ENCODE measurements at regions of chr12 and their contacts with region 1.

Region 1: GRCh38 chr12:114508529-114509129 is 102.7 kb upstream of the TBX5 start:
- DNase-seq: peak; percentile 19 to 74
- ATAC-seq: peak; percentile 53 to 61 (median 55)
- H3K4me3 ChIP-seq: no peak overlapping the region
- H3K4me3 Mint-ChIP-seq: no peak overlapping the region
- H3K27ac ChIP-seq: no peak overlapping the region
- H3K27ac Mint-ChIP-seq: no peak overlapping the region
- H3K4me1 ChIP-seq: no peaks in the 10 kb centered on the region
- H3K4me1 Mint-ChIP-seq: no peaks in the 10 kb centered on the region
- H3K27me3 ChIP-seq: no peaks in the 10 kb centered on the region
- H3K27me3 Mint-ChIP-seq: peaks cover 1 to 11% of the 10 kb centered on the region in 2 donors
- CTCF ChIP-seq: peak; percentile 57

Region 2: DNA sequence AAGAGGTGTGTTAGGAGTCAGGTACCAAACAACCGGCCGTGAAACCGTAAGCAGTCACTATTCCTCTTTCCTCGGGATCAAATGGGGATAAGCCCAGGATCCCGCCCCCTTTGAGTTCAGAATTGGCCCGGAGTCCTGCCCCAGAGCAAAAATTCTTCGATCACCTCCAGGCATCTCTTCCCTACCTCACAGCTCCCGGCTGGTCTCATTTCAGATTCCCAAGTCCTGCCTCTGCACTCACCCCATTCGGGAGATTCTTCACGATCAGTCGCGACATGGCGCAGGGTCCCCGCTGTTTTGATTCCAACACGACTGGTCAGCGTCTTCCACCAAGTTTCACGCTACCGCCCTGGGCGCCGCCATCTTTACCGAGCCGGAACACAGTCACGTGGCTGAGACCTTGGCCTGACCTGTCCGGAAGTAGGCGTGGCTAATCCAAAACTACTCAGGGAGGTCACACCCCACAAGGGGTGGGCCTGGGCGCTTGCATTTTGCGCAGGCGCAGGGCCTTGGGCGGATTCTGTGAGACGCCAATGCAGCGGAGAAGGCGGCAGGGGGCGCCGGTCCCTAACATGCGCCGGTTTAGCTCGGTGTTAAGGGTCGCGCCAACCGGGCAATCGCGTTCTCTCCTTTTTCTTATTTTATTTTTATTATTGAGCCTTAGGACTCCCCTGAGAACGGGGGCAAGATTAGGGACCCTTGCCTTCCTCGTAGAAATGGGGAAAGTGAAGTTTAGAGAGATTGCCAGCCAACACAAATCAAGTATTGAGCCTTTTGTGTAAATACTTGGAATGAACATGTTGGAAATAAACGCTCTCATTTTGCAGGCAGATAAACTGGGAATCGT is 542.5 kb before region 1 on chr12 and contains the start of gene RBM19:
- intact Hi-C with region 1: loop called (anchors 1 kb)
- DNase-seq: peak; percentile 96 to 99
- ATAC-seq: peak; percentile 99 to 100 (median 99)
- H3K4me3 ChIP-seq: peak within 1 kb of the TSS; percentile 82
- H3K4me3 Mint-ChIP-seq: peak within 1 kb of the TSS; percentile 100
- H3K27ac ChIP-seq: peak within 1 kb of the TSS; percentile 30
- H3K27ac Mint-ChIP-seq: peak within 1 kb of the TSS; percentile 97 to 100
- H3K4me1 ChIP-seq: peaks cover 20% of the 10 kb centered on the region
- H3K4me1 Mint-ChIP-seq: peaks cover 37 to 38% of the 10 kb centered on the region in 2 donors
- H3K27me3 ChIP-seq: no peaks in the 10 kb centered on the region
- H3K27me3 Mint-ChIP-seq: peaks cover 20 to 26% of the 10 kb centered on the region in 2 donors
- CTCF ChIP-seq: peak; percentile 87
- total RNA-seq, gene RBM19: 49.9 to 70.6 (median 60.9) TPM

Measured in natural killer cell (primary cell).